Activated CD4-positive, alpha-beta T cell treated with anti-CD3 and anti-CD28 coated beads for 36 hours (primary cell): ENCODE measurements at regions of chr10 and their contacts with region 1.

Region 1: GRCh38 chr10:133357285-133358151 is at the start of gene FUOM:
- DNase-seq: peak; percentile 87
- ATAC-seq: peak; percentile 92
- H3K4me3 Mint-ChIP-seq: peak within 1 kb of the TSS; percentile 77
- H3K27ac Mint-ChIP-seq: peak within 1 kb of the TSS; percentile 60
- H3K4me1 Mint-ChIP-seq: peaks cover 7% of the 10 kb centered on the region
- H3K27me3 Mint-ChIP-seq: no peaks in the 10 kb centered on the region
- total RNA-seq, gene FUOM: 28.3 to 37.0 TPM

Region 2: DNA sequence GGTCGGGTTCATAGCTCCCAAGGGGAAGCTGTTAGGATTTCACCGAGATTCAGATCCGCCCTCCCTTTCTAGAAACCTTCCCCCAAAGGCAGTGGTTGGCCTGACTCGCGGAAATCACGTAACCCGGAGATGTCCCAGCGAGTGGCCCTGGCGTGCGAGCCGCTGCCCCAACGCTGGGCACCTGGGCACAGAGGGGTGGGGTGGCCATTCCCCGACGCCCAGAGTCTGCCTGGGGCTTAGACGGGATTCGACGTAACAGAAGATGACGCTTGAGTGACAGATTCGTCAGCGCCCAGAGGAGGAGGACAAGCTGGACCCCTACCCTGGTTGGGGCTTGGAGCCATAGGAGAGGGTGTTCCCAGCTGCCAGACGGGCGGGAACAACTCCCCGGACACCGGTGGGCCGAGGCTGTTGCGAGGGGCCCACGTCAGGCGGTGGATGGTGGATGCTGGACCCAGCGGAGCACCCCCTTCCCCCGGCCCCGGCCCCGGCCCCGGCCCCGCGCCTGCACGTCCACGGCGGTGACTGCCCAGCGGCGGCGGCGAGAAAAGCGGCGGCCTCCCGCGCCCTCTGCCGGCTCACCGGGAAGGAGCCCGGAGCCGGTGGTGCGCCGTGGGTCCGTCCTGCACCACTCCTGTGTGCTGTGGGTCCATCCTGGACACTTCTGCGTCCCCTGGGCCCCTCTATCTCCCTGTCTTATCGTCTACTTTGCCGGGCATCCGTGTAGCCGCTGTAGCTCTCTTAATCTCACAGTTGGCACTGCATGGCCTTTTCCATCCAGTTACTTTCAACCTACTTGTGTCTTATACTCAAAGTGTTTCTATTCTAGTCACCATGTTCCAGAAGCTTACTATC is 232.9 kb before region 1 on chr10:
- CTCF ChIA-PET with region 1: no interaction called
- POLR2A ChIA-PET with region 1: no interaction called
- intact Hi-C with region 1: loop called in 1 of 2 experiments (anchors 2 kb)
- DNase-seq: peak; percentile 54
- ATAC-seq: peak; percentile 31
- H3K4me3 Mint-ChIP-seq: no peak overlapping the region
- H3K27ac Mint-ChIP-seq: no peak overlapping the region
- H3K4me1 Mint-ChIP-seq: peaks cover 8% of the 10 kb centered on the region
- H3K27me3 Mint-ChIP-seq: peaks cover 19% of the 10 kb centered on the region

Region 3: DNA sequence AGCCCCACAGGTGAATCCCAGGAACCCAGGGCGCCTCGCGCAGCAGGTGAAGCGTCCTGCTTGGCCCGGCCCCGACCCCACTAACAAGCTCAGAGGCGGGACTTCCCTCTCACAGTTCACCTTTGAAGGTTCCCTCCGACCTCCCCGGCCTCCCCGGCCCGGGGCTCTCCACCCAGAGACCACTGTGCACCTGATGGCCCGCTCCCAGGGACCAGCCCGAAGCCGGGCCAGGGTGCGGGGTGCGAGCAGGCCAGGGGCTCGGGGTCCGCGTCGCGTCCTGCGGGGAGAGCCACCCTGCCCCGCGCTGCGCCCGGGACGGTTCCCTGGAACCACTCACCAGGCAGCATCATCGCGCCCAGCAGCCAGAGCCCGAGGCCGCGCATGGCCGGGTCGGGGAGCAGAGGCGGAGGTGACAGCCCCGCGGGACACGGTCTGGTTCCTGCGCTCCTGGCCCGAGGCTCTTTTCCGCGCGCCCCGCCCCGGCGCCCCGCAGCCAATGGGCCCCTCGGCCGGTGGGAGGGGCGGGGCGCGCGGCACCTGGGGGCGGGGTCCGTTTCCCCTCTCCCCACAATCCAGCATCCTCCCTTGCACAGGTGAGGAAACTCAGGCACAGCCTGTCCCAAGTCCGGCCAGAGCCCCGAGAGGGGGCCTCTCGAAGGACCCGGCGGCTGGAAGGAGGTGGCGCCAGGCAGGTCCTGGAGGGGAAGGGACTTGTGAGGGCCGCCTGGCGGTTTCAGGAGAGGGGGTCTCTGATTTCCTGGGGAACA is 80.9 kb before region 1 on chr10 and contains the start of gene ADAM8:
- CTCF ChIA-PET with region 1: no interaction called
- POLR2A ChIA-PET with region 1: interaction called, 4 read pairs
- intact Hi-C with region 1: loop called in 1 of 2 experiments (anchors 1 kb)
- DNase-seq: peak; percentile 86
- ATAC-seq: peak; percentile 55
- H3K4me3 Mint-ChIP-seq: peak within 1 kb of the TSS; percentile 92
- H3K27ac Mint-ChIP-seq: peak within 1 kb of the TSS; percentile 90
- H3K4me1 Mint-ChIP-seq: peaks cover 19% of the 10 kb centered on the region
- H3K27me3 Mint-ChIP-seq: no peaks in the 10 kb centered on the region
- total RNA-seq, gene ADAM8: 124 to 176 TPM

Region 4: GRCh38 chr10:133335246-133336117 is 22.0 kb before region 1 on chr10:
- CTCF ChIA-PET with region 1: no interaction called
- POLR2A ChIA-PET with region 1: no interaction called
- intact Hi-C with region 1: loop called in 1 of 2 experiments (anchors 1 kb)
- DNase-seq: peak; percentile 86
- ATAC-seq: peak; percentile 42
- H3K4me3 Mint-ChIP-seq: peak overlapping the region; percentile 32
- H3K27ac Mint-ChIP-seq: no peak overlapping the region
- H3K4me1 Mint-ChIP-seq: peaks cover 5% of the 10 kb centered on the region
- H3K27me3 Mint-ChIP-seq: peaks cover 13% of the 10 kb centered on the region

Region 5: GRCh38 chr10:133373104-133373624 is 15.6 kb after region 1 on chr10 and contains the start of gene ECHS1:
- CTCF ChIA-PET with region 1: interaction called, 3 read pairs
- POLR2A ChIA-PET with region 1: no interaction called
- intact Hi-C with region 1: loop called (anchors 1 to 2 kb)
- DNase-seq: peak; percentile 97
- ATAC-seq: peak; percentile 100
- H3K4me3 Mint-ChIP-seq: peak within 1 kb of the TSS; percentile 73
- H3K27ac Mint-ChIP-seq: peak within 1 kb of the TSS; percentile 79
- H3K4me1 Mint-ChIP-seq: peaks cover 11% of the 10 kb centered on the region
- H3K27me3 Mint-ChIP-seq: no peaks in the 10 kb centered on the region
- total RNA-seq, gene ECHS1: 42.0 to 56.7 TPM

Region 6: DNA sequence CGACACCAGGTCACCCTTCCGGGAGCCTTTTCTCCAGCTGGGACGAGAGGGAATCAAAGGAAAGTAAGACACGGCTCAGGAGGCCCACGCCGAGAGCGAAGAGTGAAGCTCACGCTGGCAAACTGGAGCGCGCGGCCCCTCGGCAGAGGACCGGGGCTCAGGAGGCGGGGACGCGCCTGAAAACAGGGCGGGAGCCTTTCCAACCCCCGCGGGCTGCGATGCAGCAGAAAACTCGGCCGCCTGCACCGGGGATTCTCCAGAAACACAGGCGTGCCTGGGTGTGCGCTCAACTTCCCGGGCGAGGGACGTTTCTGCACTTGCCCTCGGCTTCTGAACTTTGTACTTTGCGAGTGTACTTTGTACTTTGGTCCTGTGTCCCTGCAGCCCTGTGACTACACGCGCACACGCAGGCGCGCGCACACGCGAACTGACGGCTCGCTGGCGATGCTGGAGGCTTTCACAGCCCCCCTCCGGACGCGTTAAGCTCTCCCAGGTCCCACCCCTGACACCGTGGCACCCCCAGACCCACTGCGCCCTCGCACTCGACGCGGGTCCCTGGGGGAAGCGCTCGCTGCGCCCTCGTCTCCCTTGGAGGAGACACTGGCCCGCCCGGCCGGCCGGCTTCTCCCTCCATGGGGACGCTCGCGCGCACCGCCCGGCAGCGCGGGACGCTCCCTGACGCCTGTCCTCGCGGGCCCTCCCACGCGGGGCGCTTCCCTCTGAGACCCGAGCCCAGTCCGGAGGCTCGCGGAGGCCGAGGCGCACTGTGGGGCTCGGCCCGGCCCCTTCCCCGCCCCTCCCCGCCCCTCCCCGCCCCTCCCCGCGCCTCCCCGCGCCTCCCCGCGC is 21.0 kb after region 1 on chr10:
- CTCF ChIA-PET with region 1: interaction called, 3 read pairs
- POLR2A ChIA-PET with region 1: no interaction called
- intact Hi-C with region 1: loop called (anchors 1 to 2 kb)
- DNase-seq: peak; percentile 77
- ATAC-seq: peak; percentile 57
- H3K4me3 Mint-ChIP-seq: peak overlapping the region; percentile 74
- H3K27ac Mint-ChIP-seq: peak overlapping the region; percentile 24
- H3K4me1 Mint-ChIP-seq: peaks cover 4% of the 10 kb centered on the region
- H3K27me3 Mint-ChIP-seq: no peaks in the 10 kb centered on the region

Region 7: DNA sequence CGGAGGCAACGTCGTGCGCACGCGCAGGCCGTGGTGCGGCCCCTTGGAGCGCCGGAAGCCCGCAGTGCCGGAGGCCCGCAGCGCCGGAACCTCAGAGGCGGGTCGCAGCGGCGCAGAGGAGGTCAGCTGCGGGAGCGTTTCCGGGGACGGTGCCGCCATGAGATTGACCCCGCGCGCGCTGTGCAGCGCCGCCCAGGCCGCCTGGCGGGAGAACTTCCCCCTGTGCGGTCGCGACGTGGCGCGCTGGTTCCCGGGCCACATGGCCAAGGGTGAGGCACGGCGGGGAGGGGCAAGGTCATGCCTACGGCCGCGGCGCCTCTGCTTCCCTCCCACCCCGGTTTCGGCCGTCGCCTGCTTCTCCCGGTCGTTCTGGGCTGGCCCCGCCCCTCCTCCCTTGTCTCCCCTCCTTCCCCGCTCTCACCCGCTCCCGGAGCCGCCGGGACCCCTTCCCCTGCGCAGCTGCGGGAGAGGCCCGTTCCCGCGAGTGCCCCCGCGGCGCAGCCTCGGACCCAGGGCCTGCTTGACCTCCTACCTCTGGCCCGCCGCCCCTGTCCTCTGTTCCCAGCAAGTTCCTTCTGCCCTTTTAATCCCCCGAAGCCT is 36.6 kb after region 1 on chr10 and contains the start of gene MTG1:
- CTCF ChIA-PET with region 1: no interaction called
- POLR2A ChIA-PET with region 1: no interaction called
- intact Hi-C with region 1: loop called in 1 of 2 experiments (anchors 1 kb)
- DNase-seq: peak; percentile 97
- ATAC-seq: peak; percentile 76
- H3K4me3 Mint-ChIP-seq: peak within 1 kb of the TSS; percentile 90
- H3K27ac Mint-ChIP-seq: peak within 1 kb of the TSS; percentile 93
- H3K4me1 Mint-ChIP-seq: peaks cover 51% of the 10 kb centered on the region
- H3K27me3 Mint-ChIP-seq: no peaks in the 10 kb centered on the region
- total RNA-seq, gene MTG1: 46.9 to 52.1 TPM